Endothelial cell of umbilical vein (primary cell): ENCODE measurements at regions of chr12 and their contacts with region 1.

Region 1: DNA sequence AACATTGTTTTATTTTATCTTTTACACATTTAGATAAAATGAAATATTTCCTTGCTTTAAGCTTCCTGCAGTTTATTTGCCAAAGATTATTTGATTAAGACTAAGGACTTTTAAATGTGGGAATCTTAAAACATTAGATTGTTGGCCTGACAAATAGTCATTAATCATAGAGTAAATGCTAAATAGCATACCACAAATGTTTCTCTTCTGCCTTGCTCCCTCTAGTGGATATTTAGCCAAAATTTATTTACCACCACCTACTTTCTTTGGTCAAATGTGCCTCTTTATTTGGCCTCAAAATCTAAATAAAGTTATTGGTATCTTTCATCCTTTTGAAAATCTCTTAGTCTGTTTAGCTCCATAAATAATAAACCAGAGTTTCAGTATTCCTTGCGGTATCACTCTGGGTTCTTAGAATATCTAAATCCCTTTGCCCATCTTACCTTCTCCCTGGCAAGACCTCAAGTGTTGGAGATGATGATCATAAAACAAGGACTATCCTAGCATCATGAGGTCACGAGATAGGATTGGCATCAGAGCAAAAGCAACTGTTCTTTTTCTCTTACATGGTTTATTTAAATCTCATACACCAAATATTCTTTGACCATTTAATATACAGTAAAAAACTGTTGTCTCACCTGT is 150.6 kb upstream of the AEBP2 start:
- DNase-seq: peak; percentile 58
- H3K4me3 ChIP-seq: no peak overlapping the region
- H3K27ac ChIP-seq: no peak overlapping the region
- H3K4me1 ChIP-seq: no peaks in the 10 kb centered on the region
- H3K27me3 ChIP-seq: no peaks in the 10 kb centered on the region
- CTCF ChIP-seq: peak; percentile 37 to 41
- POLR2A ChIP-seq: no peak

Region 2: GRCh38 chr12:18250313-18250916 is 1038.3 kb before region 1 on chr12:
- CTCF ChIA-PET with region 1: no interaction called
- POLR2A ChIA-PET with region 1: no interaction called
- dilution Hi-C with region 1: no loop called
- intact Hi-C with region 1: loop called (anchors 2 kb)
- DNase-seq: peak; percentile 52
- H3K4me3 ChIP-seq: no peak overlapping the region
- H3K27ac ChIP-seq: no peak overlapping the region
- H3K4me1 ChIP-seq: no peaks in the 10 kb centered on the region
- H3K27me3 ChIP-seq: no peaks in the 10 kb centered on the region
- CTCF ChIP-seq: peak; percentile 47 to 53
- POLR2A ChIP-seq: no peak

Region 3: GRCh38 chr12:18430425-18431048 is 858.2 kb before region 1 on chr12:
- CTCF ChIA-PET with region 1: no interaction called
- POLR2A ChIA-PET with region 1: no interaction called
- dilution Hi-C with region 1: no loop called
- intact Hi-C with region 1: loop called (anchors 2 kb)
- DNase-seq: peak; percentile 62
- H3K4me3 ChIP-seq: no peak overlapping the region
- H3K27ac ChIP-seq: no peak overlapping the region
- H3K4me1 ChIP-seq: no peaks in the 10 kb centered on the region
- H3K27me3 ChIP-seq: no peaks in the 10 kb centered on the region
- CTCF ChIP-seq: peak; percentile 69 to 77
- POLR2A ChIP-seq: no peak

Region 4: GRCh38 chr12:18861287-18861858 is 427.4 kb before region 1 on chr12:
- CTCF ChIA-PET with region 1: no interaction called
- POLR2A ChIA-PET with region 1: no interaction called
- dilution Hi-C with region 1: no loop called
- intact Hi-C with region 1: loop called (anchors 1 kb)
- DNase-seq: peak; percentile 60
- H3K4me3 ChIP-seq: no peak overlapping the region
- H3K27ac ChIP-seq: no peak overlapping the region
- H3K4me1 ChIP-seq: no peaks in the 10 kb centered on the region
- H3K27me3 ChIP-seq: peaks cover 2 to 3% of the 10 kb centered on the region in 2 experiments
- CTCF ChIP-seq: peak; percentile 19 to 35
- POLR2A ChIP-seq: no peak

Region 5: GRCh38 chr12:19643635-19644034 is 354.9 kb after region 1 on chr12:
- CTCF ChIA-PET with region 1: no interaction called
- POLR2A ChIA-PET with region 1: no interaction called
- dilution Hi-C with region 1: no loop called
- intact Hi-C with region 1: loop called (anchors 5 kb)
- DNase-seq: peak; percentile 83
- H3K4me3 ChIP-seq: no peak overlapping the region
- H3K27ac ChIP-seq: no peak overlapping the region
- H3K4me1 ChIP-seq: no peaks in the 10 kb centered on the region
- H3K27me3 ChIP-seq: no peaks in the 10 kb centered on the region
- CTCF ChIP-seq: peak; percentile 47 to 64
- POLR2A ChIP-seq: no peak